ENCODE measurements at regions of chr14 and their contacts with region 1.

Region 1: GRCh38 chr14:68780358-68781160 is 12.3 kb downstream of the ZFP36L1 start:
- DNase-seq: peak in 9 of 14 experiments; percentile 27 to 77 (median 44)
- ATAC-seq: peak; percentile 36
- H3K4me3 ChIP-seq: peak overlapping the region; percentile 44
- H3K4me3 Mint-ChIP-seq: peak overlapping the region; percentile 79
- H3K27ac ChIP-seq: peak overlapping the region; percentile 56 to 58
- H3K27ac Mint-ChIP-seq: peak overlapping the region; percentile 92
- H3K4me1 ChIP-seq: peaks cover 81% of the 10 kb centered on the region
- H3K4me1 Mint-ChIP-seq: peaks cover 79% of the 10 kb centered on the region
- H3K27me3 ChIP-seq: no peaks in the 10 kb centered on the region
- H3K27me3 Mint-ChIP-seq: no peaks in the 10 kb centered on the region
- CTCF ChIP-seq: no peak

Region 2: GRCh38 chr14:68718023-68718995 is 62.2 kb before region 1 on chr14:
- CTCF ChIA-PET with region 1: interaction called, 6 read pairs
- POLR2A ChIA-PET with region 1: interaction called, 7 read pairs
- intact Hi-C with region 1: loop called in 1 of 2 experiments (anchors 5 kb)
- DNase-seq: peak in 3 of 14 experiments; percentile 15 to 48 (median 38)
- ATAC-seq: no peak
- H3K4me3 ChIP-seq: no peak overlapping the region
- H3K4me3 Mint-ChIP-seq: no peak overlapping the region
- H3K27ac ChIP-seq: no peak overlapping the region
- H3K27ac Mint-ChIP-seq: no peak overlapping the region
- H3K4me1 ChIP-seq: peaks cover 17% of the 10 kb centered on the region
- H3K4me1 Mint-ChIP-seq: peaks cover 28% of the 10 kb centered on the region
- H3K27me3 ChIP-seq: no peaks in the 10 kb centered on the region
- H3K27me3 Mint-ChIP-seq: no peaks in the 10 kb centered on the region
- CTCF ChIP-seq: peak; percentile 13

Region 3: DNA sequence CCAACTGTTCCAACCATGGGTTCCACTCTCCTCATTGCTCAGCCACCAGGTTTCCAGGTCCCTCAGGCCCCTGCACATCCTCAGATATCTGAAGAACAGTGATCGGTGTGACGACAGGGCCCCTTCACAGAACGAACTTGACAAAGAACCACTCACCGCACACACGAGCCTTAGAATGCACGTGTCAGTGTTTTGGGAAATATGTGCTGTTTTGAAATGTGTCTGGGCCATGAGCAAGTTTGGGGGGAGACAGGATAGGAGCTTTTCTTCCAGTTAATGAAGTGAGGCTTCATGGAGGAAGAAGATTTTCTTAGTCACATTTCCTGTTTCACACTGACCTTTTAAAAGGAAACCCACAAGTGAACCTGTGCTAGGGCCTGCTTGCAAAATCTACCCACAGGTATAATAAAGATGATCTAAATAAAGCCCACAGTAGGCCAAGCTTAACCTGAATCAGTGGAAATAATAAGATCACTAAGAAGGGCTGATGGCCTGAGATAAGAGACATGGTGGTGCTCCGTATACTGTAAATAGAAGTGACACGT is 46.3 kb before region 1 on chr14:
- CTCF ChIA-PET with region 1: interaction called, 3 read pairs
- POLR2A ChIA-PET with region 1: no interaction called
- intact Hi-C with region 1: loop called (anchors 5 kb)
- DNase-seq: peak in 8 of 14 experiments; percentile 14 to 70 (median 40)
- ATAC-seq: peak; percentile 70
- H3K4me3 ChIP-seq: no peak overlapping the region
- H3K4me3 Mint-ChIP-seq: no peak overlapping the region
- H3K27ac ChIP-seq: peak overlapping the region in 1 of 2 donors; percentile 4
- H3K27ac Mint-ChIP-seq: peak overlapping the region; percentile 66
- H3K4me1 ChIP-seq: peaks cover 45% of the 10 kb centered on the region
- H3K4me1 Mint-ChIP-seq: peaks cover 52% of the 10 kb centered on the region
- H3K27me3 ChIP-seq: no peaks in the 10 kb centered on the region
- H3K27me3 Mint-ChIP-seq: no peaks in the 10 kb centered on the region
- CTCF ChIP-seq: no peak

Region 4: GRCh38 chr14:68795597-68796417 is 15.2 kb after region 1 on chr14:
- CTCF ChIA-PET with region 1: interaction called, 36 read pairs
- POLR2A ChIA-PET with region 1: interaction called, 230 read pairs
- intact Hi-C with region 1: loop called in 1 of 2 experiments (anchors 2 kb)
- DNase-seq: peak; percentile 66 to 95 (median 80)
- ATAC-seq: peak; percentile 43
- H3K4me3 ChIP-seq: peak overlapping the region; percentile 98
- H3K4me3 Mint-ChIP-seq: peak overlapping the region; percentile 92
- H3K27ac ChIP-seq: peak overlapping the region; percentile 100
- H3K27ac Mint-ChIP-seq: peak overlapping the region; percentile 99
- H3K4me1 ChIP-seq: peaks cover 29% of the 10 kb centered on the region
- H3K4me1 Mint-ChIP-seq: peaks cover 49% of the 10 kb centered on the region
- H3K27me3 ChIP-seq: no peaks in the 10 kb centered on the region
- H3K27me3 Mint-ChIP-seq: no peaks in the 10 kb centered on the region
- CTCF ChIP-seq: peak; percentile 77